HEK293T (cell line): ENCODE measurements at regions of chr17 and their contacts with region 1.

Region 1: DNA sequence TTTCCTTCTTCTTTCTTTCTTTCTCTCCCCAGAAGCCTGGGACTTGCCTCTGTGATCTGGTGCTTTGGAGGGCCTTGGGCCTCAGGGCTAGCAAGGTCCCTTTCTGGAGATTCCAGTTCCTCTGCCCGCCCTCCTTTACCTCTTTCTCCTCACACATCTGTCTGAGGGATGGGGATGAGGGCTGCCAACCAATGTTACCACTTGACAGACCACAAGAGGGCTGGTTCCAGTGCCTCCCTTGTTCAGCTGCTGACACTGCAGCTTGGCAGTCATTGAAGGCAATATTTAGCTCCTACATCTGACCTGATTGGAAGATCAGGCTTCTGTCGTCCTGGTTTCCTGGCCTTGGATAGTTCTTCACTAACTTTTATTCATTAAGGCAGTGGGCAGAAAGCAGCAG is 3.6 kb upstream of the ZNF652 start:
- DNase-seq: no peak

Region 2: GRCh38 chr17:49315551-49316257 is 50.0 kb before region 1 on chr17:
- CTCF ChIA-PET with region 1: interaction called, 16 read pairs
- POLR2A ChIA-PET with region 1: no interaction called
- DNase-seq: peak; percentile 81

Region 3: GRCh38 chr17:49378311-49378710 is 12.6 kb after region 1 on chr17:
- CTCF ChIA-PET with region 1: interaction called, 17 read pairs
- POLR2A ChIA-PET with region 1: interaction called, 3 read pairs
- DNase-seq: no peak

Region 4: DNA sequence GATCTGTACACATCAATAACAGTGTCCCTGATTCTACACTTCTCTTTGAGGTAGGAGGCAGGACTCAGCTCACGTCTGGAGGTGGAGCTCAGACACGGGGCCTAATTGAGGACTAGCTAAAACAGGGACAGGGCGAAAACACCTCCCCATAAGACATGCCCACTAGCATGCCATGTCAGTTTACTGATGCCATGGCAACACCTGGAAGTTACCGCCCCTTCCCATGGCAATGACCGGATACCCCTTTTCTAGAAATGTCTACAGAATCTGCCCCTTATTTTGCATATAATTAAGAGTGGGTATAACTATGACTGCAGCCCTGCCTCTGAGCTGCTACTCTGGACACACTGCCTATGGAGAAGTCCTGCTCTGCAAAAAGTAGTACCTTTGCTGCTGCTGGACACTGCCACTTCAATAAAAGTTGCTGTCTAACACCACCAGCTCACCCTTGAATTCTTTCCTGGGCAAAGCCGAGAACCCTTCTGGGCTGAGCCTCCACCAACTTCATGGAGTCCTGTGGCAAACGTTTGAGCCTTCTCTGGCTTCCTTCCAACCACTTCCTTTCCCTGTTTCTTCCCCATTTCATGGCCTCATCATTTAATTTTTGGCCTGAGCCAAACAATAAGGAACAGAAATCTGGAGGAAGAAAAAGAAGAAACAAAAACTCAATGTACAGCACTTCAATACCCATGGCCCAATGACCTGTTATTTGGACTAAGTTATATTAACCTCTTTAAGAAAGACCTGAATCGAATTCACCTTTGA is 28.0 kb after region 1 on chr17:
- CTCF ChIA-PET with region 1: interaction called, 13 read pairs
- POLR2A ChIA-PET with region 1: interaction called, 3 read pairs
- DNase-seq: no peak

Region 5: GRCh38 chr17:49659661-49660382 is 294.2 kb after region 1 on chr17:
- CTCF ChIA-PET with region 1: no interaction called
- POLR2A ChIA-PET with region 1: no interaction called
- DNase-seq: no peak